HAP-1 (cell line): ENCODE measurements at regions of chr2 and their contacts with region 1.

Region 1: DNA sequence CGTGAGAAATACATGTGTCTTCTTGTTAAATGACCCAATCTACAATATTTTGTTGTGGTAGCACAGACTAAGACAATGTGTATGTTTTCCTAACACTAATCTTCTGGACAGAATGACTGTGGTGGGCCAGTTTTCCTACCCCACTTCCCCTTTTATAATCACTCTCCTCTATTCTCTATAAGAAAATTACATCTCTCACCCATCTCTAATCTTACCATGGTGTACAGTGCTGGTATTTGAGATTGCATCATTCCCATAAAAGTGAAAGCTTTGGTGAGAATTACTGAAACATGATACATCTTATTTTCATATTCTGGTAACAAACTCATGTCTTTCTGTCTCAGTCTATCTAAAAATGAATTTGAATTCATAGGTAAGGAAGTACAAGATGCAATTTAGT is 40.5 kb downstream of the CAVIN2 start:
- DNase-seq: no peak
- H3K4me3 ChIP-seq: no peak overlapping the region
- H3K4me1 ChIP-seq: peaks cover 7% of the 10 kb centered on the region
- H3K27me3 ChIP-seq: no peaks in the 10 kb centered on the region

Region 2: GRCh38 chr2:190627448-190628412 is 1178.7 kb before region 1 on chr2:
- in situ Hi-C with region 1: no loop called
- DNase-seq: peak in 1 of 2 experiments; percentile 51
- H3K4me3 ChIP-seq: peak overlapping the region; percentile 13
- H3K4me1 ChIP-seq: peaks cover 4% of the 10 kb centered on the region; the same call in 1 of the 2 replicates
- H3K27me3 ChIP-seq: no peaks in the 10 kb centered on the region

Region 3: GRCh38 chr2:191521608-191522208 is 284.7 kb before region 1 on chr2:
- in situ Hi-C with region 1: no loop called
- DNase-seq: peak in 1 of 2 experiments; percentile 45
- H3K4me3 ChIP-seq: no peak overlapping the region
- H3K4me1 ChIP-seq: no peaks in the 10 kb centered on the region
- H3K27me3 ChIP-seq: peaks cover 11% of the 10 kb centered on the region

Region 4: DNA sequence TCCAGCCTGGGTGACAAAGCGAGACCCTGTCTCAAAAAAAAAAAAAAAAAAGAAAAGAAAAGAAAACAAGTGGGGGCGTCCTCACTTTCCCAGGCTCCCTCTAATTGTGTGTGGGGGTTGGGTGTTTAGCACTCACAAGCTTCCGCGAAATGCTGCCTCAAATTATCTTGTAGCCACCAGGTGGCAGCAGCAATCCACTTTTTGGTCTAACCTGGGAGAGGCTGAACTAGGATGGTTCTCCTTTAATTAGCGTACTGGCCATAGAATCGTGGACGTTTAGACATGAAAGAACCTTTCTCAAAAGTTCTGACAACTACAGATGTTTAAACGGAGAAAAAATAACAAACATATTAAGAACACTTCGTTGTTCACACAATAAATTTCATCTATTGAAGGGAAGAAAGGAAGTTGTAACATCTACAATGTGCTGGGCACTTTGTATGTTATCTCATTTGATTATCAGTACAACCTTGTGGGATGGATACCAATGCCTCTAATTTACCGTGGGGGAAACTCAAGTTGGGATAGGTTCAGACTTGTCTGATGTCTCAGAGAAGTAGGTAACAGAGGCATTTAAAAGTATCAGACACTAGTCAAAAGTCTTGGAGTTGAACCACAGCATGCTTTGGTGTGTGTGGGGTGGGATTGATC is 251.2 kb before region 1 on chr2:
- in situ Hi-C with region 1: loop called (anchors 10 kb)
- DNase-seq: peak; percentile 67 to 89
- H3K4me3 ChIP-seq: no peak overlapping the region
- H3K4me1 ChIP-seq: no peaks in the 10 kb centered on the region
- H3K27me3 ChIP-seq: peaks cover 4% of the 10 kb centered on the region; the same call in 1 of the 2 replicates

Region 5: DNA sequence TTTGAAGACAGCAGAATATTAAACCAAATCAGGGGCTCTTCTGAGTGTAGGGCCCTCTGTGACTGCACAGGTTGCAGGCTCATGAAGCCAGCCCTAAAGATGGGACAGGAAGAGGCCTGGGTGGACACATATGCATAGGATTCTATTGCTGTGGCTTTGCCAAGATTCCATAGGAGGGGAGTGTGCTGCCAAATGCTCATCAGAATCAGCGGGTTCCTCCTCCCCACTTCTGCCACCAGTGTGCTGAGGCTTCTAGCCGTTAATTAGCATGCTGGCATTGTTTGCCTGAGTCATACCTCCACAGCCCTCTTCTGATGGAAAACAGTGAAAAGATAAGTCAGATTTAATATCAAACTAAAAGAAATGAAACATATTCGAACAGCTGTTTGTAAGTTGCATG is 492.3 kb after region 1 on chr2:
- in situ Hi-C with region 1: no loop called
- DNase-seq: peak in 1 of 2 experiments; percentile 14
- H3K4me3 ChIP-seq: no peak overlapping the region
- H3K4me1 ChIP-seq: peaks cover 8% of the 10 kb centered on the region
- H3K27me3 ChIP-seq: no peaks in the 10 kb centered on the region